ENCODE measurements at regions of chr1 and their contacts with region 1.

Region 1: DNA sequence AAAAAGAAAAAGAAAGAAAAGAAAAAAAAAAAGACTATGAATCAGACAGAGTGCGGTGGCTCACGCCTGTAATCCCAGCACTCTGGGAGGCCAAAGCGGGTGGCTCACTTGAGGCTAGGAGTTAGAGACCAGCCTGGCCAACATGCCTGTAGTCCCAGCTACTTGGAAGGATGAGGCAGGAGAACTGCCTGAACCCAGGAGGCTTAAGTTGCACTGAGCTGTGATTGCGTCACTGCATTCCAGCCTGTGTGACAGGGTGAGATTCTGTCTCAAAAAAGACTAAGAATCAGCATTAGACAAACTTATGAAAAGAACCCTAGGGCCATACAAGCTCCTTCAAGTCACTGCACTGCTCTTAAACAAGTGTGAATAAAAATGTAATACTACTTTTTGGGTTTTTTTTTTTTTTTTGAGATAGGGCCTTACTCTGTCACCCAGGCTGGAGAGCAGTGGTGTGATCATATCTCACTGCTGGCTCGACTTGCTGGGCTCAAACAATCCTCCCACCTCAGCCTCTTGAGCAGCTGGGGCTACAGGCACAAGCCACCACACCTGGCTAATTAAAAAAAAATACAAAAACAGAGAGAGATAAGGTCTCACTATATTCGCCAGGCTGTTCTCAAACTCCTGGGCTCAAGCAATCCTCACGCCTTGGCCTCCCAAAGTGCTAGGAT is 17.0 kb downstream of the PSMB4 start:
- DNase-seq: no peak
- ATAC-seq: no peak
- H3K4me3 ChIP-seq: no peak overlapping the region
- H3K27ac ChIP-seq: no peak overlapping the region
- H3K4me1 ChIP-seq: no peaks in the 10 kb centered on the region
- H3K27me3 ChIP-seq: no peaks in the 10 kb centered on the region
- CTCF ChIP-seq: no peak
- POLR2A ChIP-seq: no peak

Region 2: GRCh38 chr1:151130987-151131586 is 285.3 kb before region 1 on chr1:
- intact Hi-C with region 1: no loop called
- DNase-seq: peak; percentile 62 to 87 (median 76)
- ATAC-seq: peak; percentile 87 to 95 (median 89)
- H3K4me3 ChIP-seq: peak overlapping the region; percentile 17 to 41 (median 26)
- H3K27ac ChIP-seq: no peak overlapping the region
- H3K4me1 ChIP-seq: no peaks in the 10 kb centered on the region
- H3K27me3 ChIP-seq: no peaks in the 10 kb centered on the region
- CTCF ChIP-seq: no peak
- POLR2A ChIP-seq: no peak

Region 3: GRCh38 chr1:151292207-151293030 is 123.9 kb before region 1 on chr1:
- intact Hi-C with region 1: loop called in 1 of 2 experiments (anchors 10 kb)
- DNase-seq: no peak
- ATAC-seq: peak in 1 of 4 donors; percentile 7
- H3K4me3 ChIP-seq: no peak overlapping the region
- H3K27ac ChIP-seq: no peak overlapping the region
- H3K4me1 ChIP-seq: no peaks in the 10 kb centered on the region
- H3K27me3 ChIP-seq: no peaks in the 10 kb centered on the region
- CTCF ChIP-seq: no peak
- POLR2A ChIP-seq: no peak

Region 4: GRCh38 chr1:151619489-151620093 is 203.2 kb after region 1 on chr1:
- intact Hi-C with region 1: no loop called
- DNase-seq: no peak
- ATAC-seq: peak; percentile 40 to 78 (median 61)
- H3K4me3 ChIP-seq: no peak overlapping the region
- H3K27ac ChIP-seq: peak overlapping the region; percentile 17 to 34 (median 18)
- H3K4me1 ChIP-seq: peaks cover 0 to 29% (median 13%) of the 10 kb centered on the region in 4 donors
- H3K27me3 ChIP-seq: no peaks in the 10 kb centered on the region
- CTCF ChIP-seq: no peak
- POLR2A ChIP-seq: no peak

Measured in right lobe of liver (tissue), 6 donors.